Activated T-helper 1 cell treated with anti-CD3 and anti-CD28 coated beads, Interleukin-12 subunit alpha, Interleukin-12 subunit beta, Interleukin-2, Interleukin-4 antibody, amounts not matched to agents 30 ng/mL and 10 ng/mL and 1 ng/mL, durations not matched to agents 14 hours and 24 hours and 36 hours (primary cell): ENCODE measurements at regions of chr6 and their contacts with region 1.

Region 1: GRCh38 chr6:12114055-12114503 is 102.0 kb downstream of the HIVEP1 start:
- DNase-seq: no peak
- H3K4me3 Mint-ChIP-seq: no peak overlapping the region
- H3K27ac Mint-ChIP-seq: peak overlapping the region; percentile 70
- H3K4me1 Mint-ChIP-seq: peaks cover 72% of the 10 kb centered on the region
- H3K27me3 Mint-ChIP-seq: no peaks in the 10 kb centered on the region

Region 2: GRCh38 chr6:12103158-12103557 is 10.9 kb before region 1 on chr6:
- intact Hi-C with region 1: loop called (anchors 1 kb)
- DNase-seq: no peak
- H3K4me3 Mint-ChIP-seq: no peak overlapping the region
- H3K27ac Mint-ChIP-seq: no peak overlapping the region
- H3K4me1 Mint-ChIP-seq: peaks cover 32% of the 10 kb centered on the region
- H3K27me3 Mint-ChIP-seq: no peaks in the 10 kb centered on the region